ENCODE measurements at regions of chr1 and their contacts with region 1.

Region 1: GRCh38 chr1:38046884-38047602 is 450 bp upstream of the POU3F1 start:
- DNase-seq: peak; percentile 71
- H3K4me3 ChIP-seq: peak overlapping the region; percentile 26 to 37 (median 28)
- H3K27ac ChIP-seq: no peak overlapping the region
- H3K4me1 ChIP-seq: peaks cover 7% of the 10 kb centered on the region
- H3K27me3 ChIP-seq: peaks cover 43 to 58% of the 10 kb centered on the region in 2 experiments
- CTCF ChIP-seq: no peak
- POLR2A ChIP-seq: no peak

Region 2: DNA sequence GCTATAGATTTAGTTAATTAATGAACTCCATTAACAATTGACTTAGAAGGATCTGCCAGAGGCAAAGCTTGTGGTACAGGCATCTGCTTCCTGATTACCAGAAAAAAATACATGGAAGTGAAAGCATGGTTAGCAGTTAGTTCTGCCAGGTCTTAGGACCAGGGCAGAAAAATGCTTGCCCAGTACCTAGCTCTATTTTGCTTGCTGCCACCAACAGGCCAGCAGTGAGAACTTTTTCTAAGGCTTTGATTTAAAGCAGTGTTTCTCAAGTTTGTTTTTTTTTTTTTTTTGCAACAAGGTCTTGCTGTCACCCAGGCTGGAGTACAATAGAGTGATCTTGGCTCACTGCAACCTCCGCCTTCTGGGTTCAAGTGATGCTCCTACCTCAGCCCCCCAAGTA is 171.2 kb before region 1 on chr1:
- CTCF ChIA-PET with region 1: no interaction called
- POLR2A ChIA-PET with region 1: no interaction called
- dilution Hi-C with region 1: no loop called
- intact Hi-C with region 1: no loop called
- DNase-seq: peak; percentile 17
- H3K4me3 ChIP-seq: no peak overlapping the region
- H3K27ac ChIP-seq: no peak overlapping the region
- H3K4me1 ChIP-seq: no peaks in the 10 kb centered on the region
- H3K27me3 ChIP-seq: no peaks in the 10 kb centered on the region
- CTCF ChIP-seq: peak in 1 of 2 donors; percentile 20
- POLR2A ChIP-seq: no peak

Region 3: GRCh38 chr1:38138498-38139233 is 91.6 kb after region 1 on chr1:
- CTCF ChIA-PET with region 1: no interaction called
- POLR2A ChIA-PET with region 1: no interaction called
- dilution Hi-C with region 1: no loop called
- intact Hi-C with region 1: loop called (anchors 5 kb)
- DNase-seq: peak; percentile 79
- H3K4me3 ChIP-seq: no peak overlapping the region
- H3K27ac ChIP-seq: no peak overlapping the region
- H3K4me1 ChIP-seq: peaks cover 6% of the 10 kb centered on the region
- H3K27me3 ChIP-seq: peaks cover 5 to 12% of the 10 kb centered on the region in 2 experiments
- CTCF ChIP-seq: no peak
- POLR2A ChIP-seq: no peak

Region 4: DNA sequence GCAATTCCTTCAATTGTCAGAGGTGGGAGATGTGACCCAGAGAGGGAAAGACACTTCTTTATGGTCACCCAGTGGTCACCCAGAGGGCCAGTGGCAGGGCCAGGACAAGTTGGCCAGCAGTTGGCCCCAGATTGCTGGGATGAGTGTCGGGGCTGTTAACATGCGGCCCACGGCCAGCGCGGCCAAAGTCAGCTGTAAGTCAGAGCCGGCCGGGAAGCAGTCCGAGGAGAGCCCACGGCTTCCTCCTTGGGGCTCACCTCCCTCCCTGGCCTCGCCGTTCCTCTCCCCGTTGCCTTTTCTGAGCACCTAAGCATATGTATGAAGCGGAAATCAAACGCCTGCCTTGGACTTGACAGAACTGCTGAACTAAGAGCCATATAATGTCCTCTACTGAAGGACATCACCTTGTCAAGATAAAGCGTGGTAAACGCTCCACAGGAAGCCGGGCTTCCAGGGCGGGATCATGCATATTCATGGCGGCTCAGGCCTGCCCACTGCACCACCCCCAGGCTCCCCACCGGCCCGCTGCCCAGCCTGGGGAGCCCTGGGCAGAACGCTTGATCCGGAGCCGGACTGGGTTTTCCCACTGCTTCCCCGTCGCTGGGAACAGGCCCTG is 245.0 kb after region 1 on chr1:
- CTCF ChIA-PET with region 1: no interaction called
- POLR2A ChIA-PET with region 1: no interaction called
- dilution Hi-C with region 1: no loop called
- intact Hi-C with region 1: no loop called
- DNase-seq: no peak
- H3K4me3 ChIP-seq: no peak overlapping the region
- H3K27ac ChIP-seq: no peak overlapping the region
- H3K4me1 ChIP-seq: no peaks in the 10 kb centered on the region
- H3K27me3 ChIP-seq: peaks cover 9% of the 10 kb centered on the region in 2 experiments
- CTCF ChIP-seq: no peak
- POLR2A ChIP-seq: no peak

Region 5: DNA sequence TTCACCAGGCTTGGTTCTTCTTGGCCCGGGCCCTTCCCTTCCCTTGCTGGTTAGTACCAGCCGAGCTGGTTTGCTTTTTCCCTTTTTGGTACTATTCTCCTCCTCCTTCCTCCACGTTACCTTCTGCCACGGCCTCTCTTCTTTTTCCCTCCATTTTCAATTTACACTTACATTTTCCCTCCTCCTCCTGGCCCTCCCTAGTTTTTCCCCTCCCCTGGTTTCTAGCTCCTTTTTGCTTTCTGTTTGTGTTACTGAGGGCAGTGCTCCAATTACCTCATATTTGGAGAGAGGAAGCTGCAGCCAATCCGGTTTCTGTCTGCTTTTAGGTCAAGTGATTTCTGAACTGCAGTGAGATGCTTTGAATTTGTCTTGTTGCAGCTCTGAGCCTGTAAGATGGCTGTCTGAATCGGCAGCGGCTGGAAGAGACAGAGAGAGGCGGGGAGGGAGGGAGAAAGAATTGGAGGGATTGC is 1221.1 kb after region 1 on chr1:
- CTCF ChIA-PET with region 1: no interaction called
- POLR2A ChIA-PET with region 1: no interaction called
- dilution Hi-C with region 1: no loop called
- intact Hi-C with region 1: no loop called
- DNase-seq: peak; percentile 78
- H3K4me3 ChIP-seq: peak overlapping the region in 2 of 3 experiments; percentile 9 to 49
- H3K27ac ChIP-seq: peak overlapping the region; percentile 70
- H3K4me1 ChIP-seq: peaks cover 22% of the 10 kb centered on the region
- H3K27me3 ChIP-seq: no peaks in the 10 kb centered on the region
- CTCF ChIP-seq: no peak
- POLR2A ChIP-seq: no peak

Measured in endothelial cell of umbilical vein (primary cell).